ENCODE measurements at regions of chr13 and their contacts with region 1.

Region 1: GRCh38 chr13:75694722-75695121 is 58.6 kb downstream of the LMO7 start:
- DNase-seq: no peak
- H3K4me3 Mint-ChIP-seq: no peak overlapping the region
- H3K27ac Mint-ChIP-seq: no peak overlapping the region
- H3K4me1 Mint-ChIP-seq: no peaks in the 10 kb centered on the region
- H3K27me3 Mint-ChIP-seq: no peaks in the 10 kb centered on the region

Region 2: DNA sequence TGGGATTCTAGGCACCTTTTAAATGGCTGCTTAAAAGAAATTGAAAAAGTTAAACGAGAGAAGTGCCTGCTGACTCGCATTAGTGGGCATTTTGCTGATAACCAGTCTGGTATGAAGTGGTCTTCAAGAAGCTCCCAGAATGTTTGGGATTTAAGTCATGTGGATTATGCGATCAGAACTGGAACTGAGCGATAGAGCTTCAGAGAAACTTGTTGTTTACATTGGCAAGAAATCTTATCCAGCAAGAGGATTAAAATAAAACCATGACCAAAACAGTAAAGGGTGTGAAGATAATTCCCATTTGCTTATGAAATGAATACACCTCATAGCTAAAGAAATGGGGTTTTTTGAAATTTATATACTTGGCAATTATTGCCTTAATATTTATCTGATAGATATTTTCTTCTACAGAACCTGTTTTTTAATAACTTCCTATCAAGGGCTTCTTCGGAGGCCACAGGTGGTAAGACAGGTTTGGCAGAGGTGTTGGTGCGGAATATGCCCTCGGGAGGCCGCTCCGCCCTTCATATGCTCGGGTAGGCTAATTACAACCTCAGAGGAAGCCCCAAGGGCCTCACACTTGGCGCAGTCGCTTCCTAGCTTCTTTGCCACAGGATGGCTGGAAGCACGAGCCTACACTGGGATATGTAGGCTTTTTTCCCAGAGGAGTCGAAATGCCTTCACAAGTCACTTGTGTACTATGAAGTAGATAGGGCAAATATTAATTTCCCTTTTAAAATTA is 10.0 kb after region 1 on chr13:
- CTCF ChIA-PET with region 1: interaction called, 24 read pairs
- POLR2A ChIA-PET with region 1: no interaction called
- intact Hi-C with region 1: no loop called
- DNase-seq: no peak
- H3K4me3 Mint-ChIP-seq: no peak overlapping the region
- H3K27ac Mint-ChIP-seq: no peak overlapping the region
- H3K4me1 Mint-ChIP-seq: peaks cover 8% of the 10 kb centered on the region
- H3K27me3 Mint-ChIP-seq: no peaks in the 10 kb centered on the region

Region 3: DNA sequence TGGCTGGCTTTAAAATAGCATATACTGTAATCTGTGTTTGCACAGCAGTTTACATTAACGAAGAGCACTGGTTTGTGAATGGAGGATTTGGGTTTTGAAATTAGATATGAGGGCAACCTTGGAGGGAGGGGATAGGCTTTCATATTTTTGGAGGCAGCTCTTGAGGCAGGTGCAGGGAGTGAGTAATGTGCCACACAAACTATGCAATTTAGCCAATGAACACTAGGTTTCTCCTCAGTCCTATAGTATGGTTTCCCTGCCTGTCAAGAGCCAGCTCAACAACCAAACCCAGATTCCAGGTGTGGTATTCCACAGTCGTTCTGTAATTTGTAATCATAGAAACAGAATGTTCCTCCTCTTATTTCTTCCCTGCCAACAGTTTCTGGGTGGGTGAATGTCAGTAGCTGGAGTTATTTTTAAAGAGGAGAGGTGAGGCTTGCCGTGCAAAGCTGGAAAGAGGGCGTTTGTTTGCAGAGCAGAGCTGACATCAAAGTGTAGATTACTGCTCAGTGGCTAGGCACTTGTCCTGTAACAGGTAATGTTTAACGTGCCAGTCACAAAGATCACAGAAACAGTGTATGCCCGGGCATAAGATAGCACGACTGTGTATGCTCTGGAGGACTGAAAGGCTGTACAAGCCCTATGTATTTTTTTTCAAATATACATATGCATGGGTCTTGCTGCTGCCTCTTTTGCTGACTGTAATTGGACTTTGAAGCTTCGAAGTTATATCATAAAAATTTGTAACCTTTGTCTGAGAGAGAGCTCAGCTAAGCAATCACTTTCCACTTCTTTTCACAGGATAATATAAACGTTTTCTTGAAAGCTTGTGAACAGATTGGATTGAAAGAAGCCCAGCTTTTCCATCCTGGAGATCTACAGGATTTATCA is 65.7 kb after region 1 on chr13:
- CTCF ChIA-PET with region 1: interaction called, 20 read pairs
- POLR2A ChIA-PET with region 1: no interaction called
- intact Hi-C with region 1: no loop called
- DNase-seq: peak; percentile 15
- H3K4me3 Mint-ChIP-seq: peak overlapping the region; percentile 40
- H3K27ac Mint-ChIP-seq: no peak overlapping the region
- H3K4me1 Mint-ChIP-seq: peaks cover 62% of the 10 kb centered on the region
- H3K27me3 Mint-ChIP-seq: peaks cover 3% of the 10 kb centered on the region

Region 4: GRCh38 chr13:75803164-75803611 is 108.5 kb after region 1 on chr13:
- CTCF ChIA-PET with region 1: interaction called, 17 read pairs
- POLR2A ChIA-PET with region 1: no interaction called
- intact Hi-C with region 1: no loop called
- DNase-seq: no peak
- H3K4me3 Mint-ChIP-seq: no peak overlapping the region
- H3K27ac Mint-ChIP-seq: no peak overlapping the region
- H3K4me1 Mint-ChIP-seq: peaks cover 42% of the 10 kb centered on the region
- H3K27me3 Mint-ChIP-seq: no peaks in the 10 kb centered on the region

Region 5: DNA sequence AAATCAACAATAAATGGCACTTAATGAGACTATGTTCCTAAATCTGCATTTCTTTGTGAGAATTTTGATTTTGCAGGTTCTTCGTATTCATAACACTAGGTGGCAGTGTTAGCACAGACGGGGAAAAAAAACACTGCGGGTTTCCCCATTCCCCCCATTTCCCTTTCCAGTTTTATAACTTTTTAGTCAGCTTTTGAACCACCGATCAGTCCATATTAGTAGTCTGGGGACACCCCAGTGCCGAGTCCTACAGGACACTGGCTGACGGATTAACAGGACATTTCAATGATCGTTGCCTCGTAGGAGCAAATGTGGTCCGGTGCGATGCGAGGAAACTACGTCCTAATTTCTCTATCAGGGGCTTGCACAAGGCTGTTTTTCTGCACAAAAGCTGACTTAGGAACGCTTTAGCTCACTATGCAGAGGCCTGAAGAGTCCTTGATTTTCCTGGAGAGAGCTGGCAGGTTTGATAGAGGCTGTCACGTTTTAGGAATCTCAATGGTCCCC is 175.7 kb after region 1 on chr13:
- CTCF ChIA-PET with region 1: interaction called, 83 read pairs
- POLR2A ChIA-PET with region 1: no interaction called
- intact Hi-C with region 1: loop called (anchors 2 kb)
- DNase-seq: peak; percentile 15
- H3K4me3 Mint-ChIP-seq: peak overlapping the region; percentile 54
- H3K27ac Mint-ChIP-seq: no peak overlapping the region
- H3K4me1 Mint-ChIP-seq: peaks cover 20% of the 10 kb centered on the region
- H3K27me3 Mint-ChIP-seq: peaks cover 2% of the 10 kb centered on the region

Region 6: GRCh38 chr13:76016799-76017400 is 322.2 kb after region 1 on chr13:
- CTCF ChIA-PET with region 1: interaction called, 9 read pairs
- POLR2A ChIA-PET with region 1: no interaction called
- intact Hi-C with region 1: loop called (anchors 2 kb)
- DNase-seq: peak; percentile 20
- H3K4me3 Mint-ChIP-seq: no peak overlapping the region
- H3K27ac Mint-ChIP-seq: no peak overlapping the region
- H3K4me1 Mint-ChIP-seq: no peaks in the 10 kb centered on the region
- H3K27me3 Mint-ChIP-seq: no peaks in the 10 kb centered on the region

Measured in activated CD4-positive, alpha-beta memory T cell treated with anti-CD3 and anti-CD28 coated beads for 36 hours (primary cell).